HEK293 (cell line): ENCODE measurements at regions of chr5 and their contacts with region 1.

Region 1: DNA sequence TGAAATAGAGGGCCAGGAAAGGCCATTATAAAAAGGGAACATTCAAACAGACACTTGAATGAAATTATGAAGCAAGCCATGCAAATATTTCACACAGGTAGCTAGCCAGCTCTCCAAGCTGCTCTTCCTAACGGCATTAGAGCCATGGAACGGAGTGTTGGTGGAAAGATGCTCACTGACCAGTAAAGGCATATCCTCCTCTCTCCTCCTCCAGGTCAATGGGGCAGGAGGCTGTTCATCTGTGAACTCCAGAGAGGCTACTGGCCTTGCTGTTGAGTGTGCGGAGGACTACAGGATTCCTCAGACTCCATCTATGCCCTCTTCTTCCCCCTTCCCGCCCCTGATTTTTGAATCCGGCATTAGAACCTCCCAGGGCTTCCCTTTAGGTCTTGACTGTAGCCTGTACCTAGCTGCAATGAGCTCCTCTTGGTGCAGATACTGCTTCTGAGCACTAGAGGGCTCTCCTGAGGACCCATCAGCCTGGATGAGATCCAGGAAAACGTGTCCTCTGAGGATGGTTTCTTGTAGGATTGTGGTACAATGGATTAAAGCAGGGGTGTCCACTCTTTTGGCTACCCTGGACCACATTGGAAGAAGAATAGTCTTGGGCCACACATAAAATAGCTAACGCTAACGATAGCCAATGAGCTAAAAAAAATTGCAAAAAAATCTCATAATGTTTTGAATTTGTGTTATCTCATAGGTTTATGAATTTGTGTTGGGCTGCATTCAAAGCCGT is 162.2 kb downstream of the SREK1 start:
- H3K4me3 ChIP-seq: no peak overlapping the region
- H3K27ac ChIP-seq: no peak overlapping the region
- H3K4me1 ChIP-seq: no peaks in the 10 kb centered on the region
- CTCF ChIP-seq: peak; percentile 44; the same call in 1 of the 2 replicates

Region 2: DNA sequence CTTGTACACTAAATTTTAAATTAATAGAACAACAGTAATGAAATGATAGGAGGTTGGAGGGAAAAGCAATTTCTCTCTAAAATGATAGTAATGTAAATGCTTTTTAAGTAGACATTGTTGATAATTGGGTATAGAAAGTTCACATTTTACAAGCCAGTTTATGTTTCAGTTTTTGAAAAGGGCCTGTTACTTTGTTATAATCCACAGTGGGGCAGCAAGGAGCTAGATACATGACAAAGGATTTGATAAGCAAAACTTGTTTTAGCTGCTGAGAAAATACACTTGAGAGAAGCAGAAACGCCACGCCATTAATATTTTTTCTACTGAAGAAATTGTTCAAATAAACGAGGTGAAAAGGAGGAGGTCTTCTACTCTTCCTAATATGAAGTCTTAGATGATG is 131.9 kb before region 1 on chr5:
- CTCF ChIA-PET with region 1: interaction called, 11 read pairs
- POLR2A ChIA-PET with region 1: no interaction called
- H3K4me3 ChIP-seq: no peak overlapping the region
- H3K27ac ChIP-seq: no peak overlapping the region
- H3K4me1 ChIP-seq: no peaks in the 10 kb centered on the region
- CTCF ChIP-seq: no peak

Region 3: DNA sequence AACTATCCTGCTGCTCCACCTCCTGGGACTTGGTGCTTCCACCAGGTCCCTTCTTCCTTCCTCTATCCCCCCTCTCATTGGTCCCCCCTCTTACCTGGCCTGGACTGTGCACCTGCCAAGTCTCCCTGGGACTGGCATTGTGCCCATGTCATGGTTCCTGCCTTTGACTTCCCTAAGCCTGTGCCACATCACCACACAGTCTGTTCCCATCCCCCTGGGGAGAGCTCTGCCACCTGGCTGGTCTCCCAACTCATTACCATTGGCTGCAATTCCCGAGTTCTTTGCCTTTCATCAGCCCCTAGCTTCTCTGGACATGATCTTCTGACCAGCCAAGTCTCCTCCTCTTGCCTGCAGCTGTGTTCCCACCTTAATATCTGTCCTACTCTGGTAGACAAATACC is 18.1 kb after region 1 on chr5:
- CTCF ChIA-PET with region 1: interaction called, 21 read pairs
- POLR2A ChIA-PET with region 1: no interaction called
- H3K4me3 ChIP-seq: no peak overlapping the region
- H3K27ac ChIP-seq: no peak overlapping the region
- H3K4me1 ChIP-seq: no peaks in the 10 kb centered on the region
- CTCF ChIP-seq: no peak

Region 4: GRCh38 chr5:66454186-66455078 is 148.2 kb after region 1 on chr5:
- CTCF ChIA-PET with region 1: no interaction called
- POLR2A ChIA-PET with region 1: no interaction called
- H3K4me3 ChIP-seq: peak overlapping the region; percentile 4; the same call in 1 of the 2 replicates
- H3K27ac ChIP-seq: no peak overlapping the region
- H3K4me1 ChIP-seq: no peaks in the 10 kb centered on the region
- CTCF ChIP-seq: no peak

Region 5: DNA sequence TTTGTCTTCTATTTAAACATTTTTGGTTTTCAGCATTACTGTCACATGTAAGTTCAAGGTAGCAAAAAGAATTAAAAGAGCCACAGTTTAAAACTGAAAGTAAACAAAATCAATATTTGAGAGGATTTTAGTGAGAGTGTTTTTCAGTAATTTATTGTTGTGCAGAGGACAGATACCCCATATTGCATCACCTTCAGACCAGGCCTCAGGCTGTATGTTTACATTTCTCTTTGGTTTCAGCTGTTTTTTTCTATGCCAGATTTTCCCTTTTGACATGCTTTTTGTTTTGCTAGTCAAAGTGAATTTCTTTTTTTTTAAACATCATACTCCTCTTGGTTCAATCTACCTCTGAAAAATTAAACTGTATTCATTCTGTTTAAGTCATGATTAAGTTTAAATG is 337.1 kb after region 1 on chr5:
- CTCF ChIA-PET with region 1: no interaction called
- POLR2A ChIA-PET with region 1: no interaction called
- H3K4me3 ChIP-seq: no peak overlapping the region
- H3K27ac ChIP-seq: no peak overlapping the region
- H3K4me1 ChIP-seq: peaks cover 13% of the 10 kb centered on the region
- CTCF ChIP-seq: no peak

Region 6: GRCh38 chr5:66757188-66757833 is 451.0 kb after region 1 on chr5:
- CTCF ChIA-PET with region 1: interaction called, 82 read pairs
- POLR2A ChIA-PET with region 1: no interaction called
- H3K4me3 ChIP-seq: no peak overlapping the region
- H3K27ac ChIP-seq: no peak overlapping the region
- H3K4me1 ChIP-seq: no peaks in the 10 kb centered on the region
- CTCF ChIP-seq: no peak

Region 7: DNA sequence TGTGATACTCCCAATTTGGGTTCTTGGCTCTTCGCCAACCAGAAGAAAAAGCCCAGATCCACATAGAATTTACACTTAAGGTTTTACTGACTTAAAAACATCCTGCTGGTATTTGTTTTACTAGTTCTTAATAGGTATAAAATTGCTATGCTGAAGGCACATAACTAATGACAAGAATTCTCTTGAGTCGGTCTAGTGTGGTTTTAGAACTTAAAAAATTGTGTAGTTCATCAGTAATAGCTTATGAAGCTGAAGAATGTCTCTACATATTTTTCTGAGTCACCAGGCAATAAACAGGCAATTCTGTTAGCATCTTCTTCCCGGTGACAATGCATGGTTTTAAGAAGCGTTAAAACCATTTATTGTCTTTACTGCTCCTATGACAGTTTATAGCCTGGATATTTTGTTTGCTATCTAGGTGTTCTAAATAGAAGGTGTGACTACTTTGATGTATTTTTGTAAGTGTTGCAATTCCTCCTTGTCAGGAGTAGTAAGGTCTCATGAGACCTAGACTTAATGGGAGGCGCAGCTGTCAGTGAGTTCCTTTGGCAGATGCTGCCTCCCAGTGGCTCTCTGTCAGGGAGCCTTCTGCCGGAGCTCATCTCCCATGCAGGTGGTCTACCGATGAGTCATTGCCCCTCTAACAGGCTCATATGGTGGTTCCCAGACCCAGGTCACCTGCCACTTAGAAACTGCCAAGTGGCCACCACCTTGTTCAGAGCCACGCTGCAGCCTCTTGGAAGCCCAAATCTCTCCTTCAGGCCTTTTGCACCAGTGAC is 463.8 kb after region 1 on chr5:
- CTCF ChIA-PET with region 1: interaction called, 21 read pairs
- POLR2A ChIA-PET with region 1: no interaction called
- H3K4me3 ChIP-seq: no peak overlapping the region
- H3K27ac ChIP-seq: no peak overlapping the region
- H3K4me1 ChIP-seq: no peaks in the 10 kb centered on the region
- CTCF ChIP-seq: peak; percentile 43; the same call in 1 of the 2 replicates